ENCODE measurements at regions of chrX and their contacts with region 1.

Region 1: DNA sequence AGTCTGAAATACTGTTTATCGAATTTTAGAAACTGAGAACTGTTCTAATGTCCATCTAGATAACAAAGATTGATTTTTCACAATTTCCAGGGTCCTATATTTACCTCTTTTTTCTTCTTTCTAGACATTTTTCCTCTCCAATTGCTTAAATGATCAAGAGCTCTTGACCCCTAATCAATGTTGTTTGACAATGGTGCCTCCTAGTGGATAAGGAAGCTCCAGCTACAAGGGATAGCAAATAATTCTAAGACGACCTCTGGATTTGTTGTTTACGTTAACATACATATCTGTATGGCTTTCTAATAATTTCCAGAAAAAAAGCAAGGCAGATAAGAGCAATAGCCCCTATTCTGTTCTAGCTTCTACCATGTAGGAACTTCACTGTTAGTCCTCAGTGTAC is 35.8 kb downstream of the GPR82 start:
- H3K4me3 ChIP-seq: no peak overlapping the region
- H3K27ac ChIP-seq: no peak overlapping the region
- H3K4me1 ChIP-seq: no peaks in the 10 kb centered on the region
- CTCF ChIP-seq: no peak

Region 2: GRCh38 chrX:41558531-41558930 is 201.3 kb before region 1 on chrX:
- CTCF ChIA-PET with region 1: interaction called, 26 read pairs
- POLR2A ChIA-PET with region 1: no interaction called
- H3K4me3 ChIP-seq: no peak overlapping the region
- H3K27ac ChIP-seq: no peak overlapping the region
- H3K4me1 ChIP-seq: 0 out of 2 replicates have a peak, but pooled peaks cover 2% of the 10 kb centered on the region
- CTCF ChIP-seq: no peak

Region 3: DNA sequence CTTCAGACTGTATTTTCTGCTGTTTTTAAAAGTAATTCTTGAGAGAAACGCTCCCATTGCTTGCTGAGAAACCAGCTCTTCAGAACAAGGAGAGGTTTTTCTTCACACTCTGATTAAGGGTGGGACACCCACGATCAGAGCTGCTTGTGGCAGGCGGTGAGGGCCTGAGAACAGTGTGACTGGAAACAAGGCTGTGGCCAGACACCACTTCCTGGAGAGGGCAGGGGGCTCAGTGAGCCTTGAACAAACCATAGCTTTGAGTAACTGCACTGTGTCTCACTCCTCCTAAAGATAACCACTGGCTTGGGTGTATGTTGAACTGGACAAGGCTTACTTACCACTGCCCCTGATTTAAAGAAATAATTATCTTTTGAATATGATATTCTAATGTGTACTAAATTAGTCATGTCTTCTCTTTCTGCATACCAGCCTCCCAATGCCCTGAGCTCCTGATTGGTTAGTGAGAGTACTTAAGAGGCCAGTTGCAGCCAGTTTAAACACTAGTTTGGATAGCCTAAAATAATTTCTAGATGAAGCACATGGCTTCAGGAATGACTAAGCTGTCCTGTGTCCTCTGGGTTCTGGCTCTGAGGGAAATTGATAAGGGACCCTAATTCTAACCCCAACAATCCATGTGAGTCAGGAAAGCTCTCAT is 39.6 kb before region 1 on chrX:
- CTCF ChIA-PET with region 1: no interaction called
- POLR2A ChIA-PET with region 1: no interaction called
- H3K4me3 ChIP-seq: no peak overlapping the region
- H3K27ac ChIP-seq: no peak overlapping the region
- H3K4me1 ChIP-seq: no peaks in the 10 kb centered on the region
- CTCF ChIP-seq: no peak

Region 4: DNA sequence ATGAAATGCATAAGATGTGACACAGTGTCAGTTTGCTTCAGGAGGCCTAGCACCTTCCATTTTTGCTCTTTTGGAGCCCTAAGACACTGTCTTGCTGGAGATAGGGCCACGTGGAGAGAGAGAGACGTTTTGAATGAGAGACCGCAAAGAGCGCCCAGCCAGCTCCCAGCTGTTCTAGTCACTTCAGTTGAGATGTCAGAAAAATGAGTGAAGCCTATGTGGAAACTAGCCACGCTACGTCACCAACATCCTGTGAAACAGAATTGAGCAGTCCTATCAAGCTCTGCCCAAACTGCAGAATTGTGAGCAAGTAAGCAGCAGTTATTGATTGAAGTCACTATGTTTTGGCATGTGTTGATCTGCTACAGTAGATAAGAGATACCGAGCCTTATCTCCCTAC is 22.8 kb before region 1 on chrX:
- CTCF ChIA-PET with region 1: interaction called, 12 read pairs
- POLR2A ChIA-PET with region 1: no interaction called
- H3K4me3 ChIP-seq: no peak overlapping the region
- H3K27ac ChIP-seq: no peak overlapping the region
- H3K4me1 ChIP-seq: no peaks in the 10 kb centered on the region
- CTCF ChIP-seq: no peak